ENCODE measurements at regions of chr12 and their contacts with region 1.

Region 1: GRCh38 chr12:15856097-15856982 is 25.8 kb upstream of the STRAP start:
- DNase-seq: no peak
- ATAC-seq: peak; percentile 66 to 68
- H3K4me3 ChIP-seq: no peak overlapping the region
- H3K27ac ChIP-seq: no peak overlapping the region
- H3K4me1 ChIP-seq: no peaks in the 10 kb centered on the region
- H3K27me3 ChIP-seq: no peaks in the 10 kb centered on the region

Region 2: DNA sequence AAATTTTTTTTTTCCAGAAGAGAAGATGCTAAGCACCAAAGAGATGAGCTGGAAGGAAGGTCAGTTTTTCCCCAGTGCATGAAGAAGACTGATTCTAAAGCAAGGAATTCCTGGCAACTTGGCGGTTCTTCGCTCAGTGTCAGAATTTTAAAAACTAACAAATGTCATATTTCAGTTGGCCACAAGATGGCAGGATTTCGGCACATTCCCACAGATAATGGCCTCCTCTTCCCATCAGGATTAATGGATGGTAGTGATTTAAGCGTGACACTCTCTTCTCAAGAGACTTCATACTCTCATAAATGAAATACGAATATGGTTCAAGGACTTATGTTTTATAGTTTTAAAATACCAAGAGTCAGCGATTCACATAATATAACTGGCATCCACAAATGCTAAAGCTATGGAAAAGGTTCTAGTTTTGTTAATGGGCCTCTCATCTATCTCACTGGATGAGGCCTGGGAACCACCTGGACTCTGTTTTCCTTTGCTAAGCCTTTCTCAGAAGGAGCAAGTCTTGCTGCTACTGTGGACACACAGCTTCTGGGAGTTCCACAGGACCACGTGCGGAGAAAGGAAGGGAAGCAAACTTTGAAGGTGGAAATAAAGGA is 580.1 kb before region 1 on chr12:
- intact Hi-C with region 1: loop called in 2 of 4 experiments (anchors 10 kb)
- DNase-seq: no peak
- ATAC-seq: peak; percentile 46 to 58
- H3K4me3 ChIP-seq: no peak overlapping the region
- H3K27ac ChIP-seq: no peak overlapping the region
- H3K4me1 ChIP-seq: peaks cover 2% of the 10 kb centered on the region
- H3K27me3 ChIP-seq: no peaks in the 10 kb centered on the region

Region 3: GRCh38 chr12:15532364-15532977 is 323.9 kb before region 1 on chr12:
- intact Hi-C with region 1: loop called in 2 of 4 experiments (anchors 5 kb)
- DNase-seq: no peak
- ATAC-seq: peak; percentile 60
- H3K4me3 ChIP-seq: no peak overlapping the region
- H3K27ac ChIP-seq: no peak overlapping the region
- H3K4me1 ChIP-seq: no peaks in the 10 kb centered on the region
- H3K27me3 ChIP-seq: no peaks in the 10 kb centered on the region

Region 4: DNA sequence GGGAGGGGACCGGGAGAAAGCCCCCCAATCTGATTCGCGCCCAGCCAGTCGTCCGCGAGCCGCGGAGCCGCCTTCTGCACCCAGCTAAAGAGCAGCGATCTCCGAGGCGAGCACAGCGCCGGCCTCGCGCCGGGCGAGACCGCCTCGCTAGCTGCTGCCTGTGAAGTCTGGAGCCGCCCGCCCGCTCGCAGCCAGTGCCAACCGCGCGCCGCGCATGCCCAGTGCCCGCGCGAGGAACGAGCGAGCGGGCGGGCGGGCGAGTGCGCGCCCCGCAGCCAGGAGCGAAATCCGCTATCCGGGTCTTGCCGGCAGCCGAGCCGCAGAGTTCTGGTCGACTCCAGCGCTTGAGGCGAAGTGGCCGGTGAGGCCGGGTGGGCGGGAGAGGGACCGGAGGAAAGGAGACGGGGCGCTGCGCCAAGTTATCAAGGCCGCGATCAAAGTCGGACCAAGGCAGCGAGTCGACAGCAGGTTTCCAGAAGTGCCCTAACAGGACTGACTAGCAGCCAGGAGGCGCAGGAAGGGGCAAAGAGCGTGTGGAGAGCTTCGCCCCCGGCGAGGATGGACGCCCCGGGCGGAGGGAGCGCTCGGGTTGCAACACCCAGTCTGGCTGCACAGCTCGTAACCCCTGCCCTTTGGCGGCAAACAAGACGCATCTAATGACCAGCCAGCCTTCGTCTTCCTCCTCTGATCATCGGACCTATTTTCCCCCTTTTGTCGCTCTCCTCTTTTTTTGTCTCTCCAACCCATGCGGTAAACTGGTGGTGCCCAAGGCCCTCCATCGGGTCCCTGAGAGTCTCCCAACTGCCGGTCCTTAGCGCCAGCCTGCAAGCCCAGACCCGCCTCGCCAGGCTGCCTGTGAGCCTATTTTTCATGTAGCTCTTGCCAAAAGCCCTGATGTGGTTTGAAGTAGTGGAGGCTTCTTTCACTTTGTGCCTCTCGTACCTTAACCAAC is 66.8 kb before region 1 on chr12 and contains the start of gene EPS8:
- intact Hi-C with region 1: loop called in 1 of 4 experiments (anchors 5 kb)
- DNase-seq: peak; percentile 93 to 97 (median 97)
- ATAC-seq: peak; percentile 98 to 99
- H3K4me3 ChIP-seq: peak within 1 kb of the TSS; percentile 88
- H3K27ac ChIP-seq: peak within 1 kb of the TSS; percentile 77
- H3K4me1 ChIP-seq: no peaks in the 10 kb centered on the region
- H3K27me3 ChIP-seq: no peaks in the 10 kb centered on the region
- total RNA-seq, gene EPS8: 27.3 to 39.7 (median 32.8) TPM